H1 (cell line): ENCODE measurements at regions of chr9 and their contacts with region 1.

Region 1: GRCh38 chr9:122931226-122932121 is at the start of gene ZBTB26:
- DNase-seq: peak; percentile 80 to 95
- H3K4me3 ChIP-seq: peak within 1 kb of the TSS; percentile 96 to 100 (median 98)
- H3K27ac ChIP-seq: peak within 1 kb of the TSS; percentile 59; the same call in 1 of the 2 replicates
- H3K4me1 ChIP-seq: peaks cover 0 to 6% (median under 1%) of the 10 kb centered on the region in 4 experiments; a peak in 4 of 7 replicates
- H3K27me3 ChIP-seq: no peaks in the 10 kb centered on the region
- CTCF ChIP-seq: no peak
- EP300 ChIP-seq: no peak
- POLR2A ChIP-seq: peak; percentile 82 to 97
- RAD21 ChIP-seq: no peak
- total RNA-seq, gene ZBTB26: 7.3 and 7.4 TPM in 2 replicates

Region 2: GRCh38 chr9:122904823-122905710 is 26.4 kb before region 1 on chr9 and contains the start of gene RC3H2:
- CTCF ChIA-PET with region 1: interaction called, 3 read pairs
- POLR2A ChIA-PET with region 1: interaction called, 26 read pairs
- DNase-seq: peak; percentile 94 to 100
- H3K4me3 ChIP-seq: peak within 1 kb of the TSS; percentile 89 to 93 (median 92)
- H3K27ac ChIP-seq: peak within 1 kb of the TSS; percentile 79
- H3K4me1 ChIP-seq: no peaks in the 10 kb centered on the region; a peak in 1 of 7 replicates
- H3K27me3 ChIP-seq: no peaks in the 10 kb centered on the region
- CTCF ChIP-seq: no peak
- EP300 ChIP-seq: no peak
- POLR2A ChIP-seq: peak; percentile 95 to 97
- RAD21 ChIP-seq: no peak
- total RNA-seq, gene RC3H2: 38.4 and 40.0 TPM in 2 replicates

Region 3: GRCh38 chr9:122912964-122913673 is 18.4 kb before region 1 on chr9 and contains the start of gene ZBTB6:
- CTCF ChIA-PET with region 1: interaction called, 5 read pairs
- POLR2A ChIA-PET with region 1: interaction called, 78 read pairs
- DNase-seq: peak in 1 of 2 experiments; percentile 76
- H3K4me3 ChIP-seq: peak within 1 kb of the TSS; percentile 76 to 91 (median 88)
- H3K27ac ChIP-seq: peak within 1 kb of the TSS; percentile 93
- H3K4me1 ChIP-seq: no peaks in the 10 kb centered on the region; a peak in 2 of 7 replicates
- H3K27me3 ChIP-seq: no peaks in the 10 kb centered on the region
- CTCF ChIP-seq: no peak
- EP300 ChIP-seq: no peak
- POLR2A ChIP-seq: peak; percentile 62 to 95
- RAD21 ChIP-seq: 0 out of 4 replicates have a peak, but pooled peaks of 1 of the 2 experiments have one; percentile 10
- total RNA-seq, gene ZBTB6: 9.3 and 10.0 TPM in 2 replicates

Region 4: DNA sequence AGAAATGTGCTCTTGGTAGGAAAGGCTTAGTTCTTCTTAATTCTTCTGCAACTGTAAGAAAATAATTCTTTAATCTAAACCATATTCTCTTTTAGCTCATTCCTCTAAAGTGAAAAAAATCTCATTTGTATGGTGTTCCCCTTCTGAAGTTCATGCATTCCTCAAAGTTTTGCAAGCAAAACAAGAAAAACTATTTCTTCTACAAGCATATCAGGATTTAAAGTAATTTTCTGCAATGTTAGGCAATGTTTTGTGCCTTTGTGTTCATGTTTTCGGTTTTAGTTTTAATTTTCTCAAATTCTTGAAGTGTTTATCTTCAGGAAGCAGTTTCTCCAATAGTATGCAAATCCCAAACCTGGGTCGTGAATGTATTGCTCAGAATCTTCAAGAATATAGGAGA is 89.3 kb after region 1 on chr9:
- CTCF ChIA-PET with region 1: no interaction called
- POLR2A ChIA-PET with region 1: no interaction called
- DNase-seq: no peak
- H3K4me3 ChIP-seq: no peak overlapping the region
- H3K27ac ChIP-seq: no peak overlapping the region
- H3K4me1 ChIP-seq: no peaks in the 10 kb centered on the region
- H3K27me3 ChIP-seq: no peaks in the 10 kb centered on the region
- CTCF ChIP-seq: no peak
- EP300 ChIP-seq: no peak
- POLR2A ChIP-seq: no peak
- RAD21 ChIP-seq: no peak